IMR-90 (cell line): ENCODE measurements at regions of chr3 and their contacts with region 1.

Region 1: DNA sequence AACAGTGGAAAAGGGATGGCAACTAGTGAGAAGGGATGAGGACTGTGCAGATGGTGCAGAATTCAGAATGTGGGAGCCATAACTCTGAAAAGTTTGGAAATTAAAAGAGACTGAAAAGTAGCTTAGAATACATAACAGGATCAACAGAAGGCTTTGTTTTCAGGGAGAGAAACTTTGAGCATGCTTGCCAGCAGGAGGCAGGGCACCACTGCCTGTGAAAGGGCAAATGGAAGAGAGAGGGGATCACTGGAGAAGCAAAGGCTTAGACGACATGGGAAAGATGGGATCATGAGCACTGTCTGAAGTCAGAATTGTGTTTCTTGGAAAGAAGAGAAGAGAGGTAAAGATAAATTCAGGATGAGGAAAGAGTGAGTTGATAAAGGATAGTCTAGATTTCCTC is 99.6 kb downstream of the ABI3BP start:
- DNase-seq: peak; percentile 66
- ATAC-seq: peak; percentile 77
- H3K4me3 ChIP-seq: no peak overlapping the region
- H3K27ac ChIP-seq: no peak overlapping the region
- H3K4me1 ChIP-seq: no peaks in the 10 kb centered on the region
- H3K27me3 ChIP-seq: no peaks in the 10 kb centered on the region
- CTCF ChIP-seq: peak; percentile 81
- POLR2A ChIP-seq: peak; percentile 47; the same call in 1 of the 2 replicates
- RAD21 ChIP-seq: peak; percentile 96

Region 2: GRCh38 chr3:100463002-100463401 is 430.6 kb before region 1 on chr3:
- CTCF ChIA-PET with region 1: no interaction called
- POLR2A ChIA-PET with region 1: no interaction called
- dilution Hi-C with region 1: no loop called
- in situ Hi-C with region 1: no loop called
- intact Hi-C with region 1: loop called (anchors 2 kb)
- DNase-seq: peak; percentile 78
- ATAC-seq: peak; percentile 94
- H3K4me3 ChIP-seq: no peak overlapping the region
- H3K27ac ChIP-seq: no peak overlapping the region
- H3K4me1 ChIP-seq: no peaks in the 10 kb centered on the region; the same call in 1 of the 2 replicates
- H3K27me3 ChIP-seq: no peaks in the 10 kb centered on the region
- CTCF ChIP-seq: peak; percentile 92
- POLR2A ChIP-seq: 0 out of 2 replicates have a peak, but pooled peaks have one; percentile 27
- RAD21 ChIP-seq: peak; percentile 98

Region 3: DNA sequence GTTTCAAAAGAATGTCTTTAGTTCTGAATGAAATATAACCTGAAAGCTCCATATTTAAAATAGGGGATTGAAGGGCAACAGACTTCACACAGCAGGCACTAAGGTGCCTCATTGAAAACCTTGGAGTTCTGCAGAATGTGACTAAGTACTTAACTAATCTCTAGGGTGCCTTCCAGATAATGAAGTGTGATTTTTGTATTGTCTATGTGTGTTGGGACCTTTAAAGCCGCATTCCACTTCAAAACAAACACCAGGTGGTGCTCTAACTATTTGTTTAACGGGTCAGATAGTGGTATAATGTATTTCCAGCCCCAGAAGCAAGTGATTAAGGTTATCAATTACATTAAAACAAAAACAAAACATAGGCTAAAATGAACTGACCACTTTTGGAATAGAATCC is 156.3 kb before region 1 on chr3:
- CTCF ChIA-PET with region 1: no interaction called
- POLR2A ChIA-PET with region 1: no interaction called
- dilution Hi-C with region 1: no loop called
- in situ Hi-C with region 1: no loop called
- intact Hi-C with region 1: loop called (anchors 5 kb)
- DNase-seq: peak; percentile 15
- ATAC-seq: no peak; the same call in 1 of the 2 replicates
- H3K4me3 ChIP-seq: no peak overlapping the region
- H3K27ac ChIP-seq: no peak overlapping the region
- H3K4me1 ChIP-seq: 0 out of 2 replicates have a peak, but pooled peaks cover 1% of the 10 kb centered on the region
- H3K27me3 ChIP-seq: no peaks in the 10 kb centered on the region
- CTCF ChIP-seq: peak; percentile 39
- POLR2A ChIP-seq: no peak
- RAD21 ChIP-seq: peak; percentile 44

Region 4: GRCh38 chr3:100782906-100783305 is 110.7 kb before region 1 on chr3:
- CTCF ChIA-PET with region 1: no interaction called
- POLR2A ChIA-PET with region 1: no interaction called
- dilution Hi-C with region 1: no loop called
- in situ Hi-C with region 1: no loop called
- intact Hi-C with region 1: no loop called
- DNase-seq: peak; percentile 11
- ATAC-seq: no peak
- H3K4me3 ChIP-seq: no peak overlapping the region
- H3K27ac ChIP-seq: no peak overlapping the region
- H3K4me1 ChIP-seq: peaks cover 4% of the 10 kb centered on the region
- H3K27me3 ChIP-seq: no peaks in the 10 kb centered on the region
- CTCF ChIP-seq: no peak
- POLR2A ChIP-seq: no peak
- RAD21 ChIP-seq: no peak

Region 5: DNA sequence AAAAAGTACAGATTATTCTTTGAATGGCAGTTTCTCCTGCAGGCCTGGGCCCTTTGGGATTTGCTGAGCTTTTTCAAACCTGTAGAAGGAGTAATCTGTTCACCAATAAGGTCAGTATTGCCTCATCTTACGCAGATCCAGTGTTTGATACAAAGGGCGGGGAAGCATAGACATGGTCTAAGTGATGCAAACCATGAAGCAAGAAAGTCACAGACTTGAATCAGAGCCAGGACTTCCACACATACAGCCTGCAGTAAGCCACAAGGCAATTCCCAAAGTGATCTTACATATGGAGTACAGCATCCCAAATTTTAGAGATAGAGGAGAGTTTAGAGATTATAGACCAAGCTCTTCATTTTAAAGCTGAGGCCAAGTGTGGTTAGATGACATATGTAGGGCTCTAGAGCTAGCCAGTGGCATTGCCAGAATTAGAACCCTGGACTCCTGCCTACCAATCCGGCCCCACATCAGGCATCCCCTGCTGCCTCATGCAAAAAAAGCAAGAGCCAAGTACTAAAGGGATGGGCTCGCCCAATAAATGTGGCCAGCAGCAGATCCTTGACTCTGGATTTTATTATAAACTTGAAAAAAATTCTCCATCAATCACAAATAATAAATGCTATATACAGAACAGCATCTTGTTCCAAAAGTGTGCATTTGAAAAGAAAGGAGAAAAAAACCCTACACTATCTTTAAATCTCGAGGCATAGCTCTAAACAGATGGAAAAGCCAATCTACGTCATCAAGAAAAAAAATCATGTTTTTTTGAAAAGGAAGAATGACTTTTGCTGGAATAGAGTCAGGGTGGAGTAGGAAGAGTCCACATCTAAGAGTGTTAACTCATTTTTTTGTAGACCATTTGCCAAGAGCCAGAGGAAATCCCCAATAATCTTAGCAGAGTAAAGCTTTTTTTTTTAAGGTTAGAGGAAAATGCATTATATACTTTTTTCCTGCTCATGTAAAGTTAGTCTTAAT is 75.6 kb after region 1 on chr3:
- CTCF ChIA-PET with region 1: no interaction called
- POLR2A ChIA-PET with region 1: no interaction called
- dilution Hi-C with region 1: no loop called
- in situ Hi-C with region 1: no loop called
- intact Hi-C with region 1: no loop called
- DNase-seq: no peak
- ATAC-seq: no peak
- H3K4me3 ChIP-seq: no peak overlapping the region
- H3K27ac ChIP-seq: no peak overlapping the region
- H3K4me1 ChIP-seq: peaks cover 4% of the 10 kb centered on the region; the same call in 1 of the 2 replicates
- H3K27me3 ChIP-seq: no peaks in the 10 kb centered on the region
- CTCF ChIP-seq: no peak
- POLR2A ChIP-seq: no peak
- RAD21 ChIP-seq: no peak

Region 6: GRCh38 chr3:100993309-100993708 is 99.7 kb after region 1 on chr3 and contains the start of gene ABI3BP:
- CTCF ChIA-PET with region 1: no interaction called
- POLR2A ChIA-PET with region 1: no interaction called
- dilution Hi-C with region 1: no loop called
- in situ Hi-C with region 1: no loop called
- intact Hi-C with region 1: no loop called
- DNase-seq: peak; percentile 89
- ATAC-seq: peak; percentile 99
- H3K4me3 ChIP-seq: peak within 1 kb of the TSS; percentile 55
- H3K27ac ChIP-seq: peak within 1 kb of the TSS; percentile 10; the same call in 1 of the 2 replicates
- H3K4me1 ChIP-seq: peaks cover 2% of the 10 kb centered on the region; the same call in 1 of the 2 replicates
- H3K27me3 ChIP-seq: peaks cover 2% of the 10 kb centered on the region
- CTCF ChIP-seq: no peak
- POLR2A ChIP-seq: no peak
- RAD21 ChIP-seq: no peak; the same call in 1 of the 2 replicates
- total RNA-seq, gene ABI3BP: 3.0 and 4.2 TPM in 2 replicates

Region 7: GRCh38 chr3:101069901-101070798 is 176.6 kb after region 1 on chr3:
- CTCF ChIA-PET with region 1: interaction called, 6 read pairs
- POLR2A ChIA-PET with region 1: interaction called, 5 read pairs
- dilution Hi-C with region 1: no loop called
- in situ Hi-C with region 1: no loop called
- intact Hi-C with region 1: loop called (anchors 5 kb)
- DNase-seq: peak; percentile 22
- ATAC-seq: 0 out of 2 replicates have a peak, but pooled peaks have one; percentile 6
- H3K4me3 ChIP-seq: no peak overlapping the region
- H3K27ac ChIP-seq: 0 out of 2 replicates have a peak overlapping the region, but pooled peaks have one; percentile 5
- H3K4me1 ChIP-seq: peaks cover 15% of the 10 kb centered on the region
- H3K27me3 ChIP-seq: no peaks in the 10 kb centered on the region
- CTCF ChIP-seq: peak; percentile 39
- POLR2A ChIP-seq: no peak
- RAD21 ChIP-seq: peak; percentile 37

Region 8: DNA sequence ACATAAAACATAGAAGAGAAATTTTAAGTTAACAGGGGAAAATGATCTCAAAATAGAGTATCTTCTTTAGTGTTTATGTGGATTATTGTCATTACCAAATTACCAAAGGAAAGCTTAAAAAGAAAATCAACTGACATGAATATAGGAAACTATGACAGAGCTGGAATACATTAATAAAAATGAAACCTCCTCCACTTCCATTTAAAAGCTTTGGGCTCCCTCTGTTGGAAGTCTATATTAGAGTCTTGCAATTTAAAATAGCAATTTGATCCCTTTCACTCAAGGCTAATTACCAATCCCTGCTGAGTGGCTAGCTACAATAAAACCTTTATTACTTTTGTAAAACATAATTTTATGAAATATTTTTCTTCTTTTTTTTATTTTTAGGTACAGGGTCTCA is 488.2 kb after region 1 on chr3:
- CTCF ChIA-PET with region 1: interaction called, 4 read pairs
- POLR2A ChIA-PET with region 1: no interaction called
- dilution Hi-C with region 1: no loop called
- in situ Hi-C with region 1: no loop called
- intact Hi-C with region 1: loop called (anchors 1 kb)
- DNase-seq: peak; percentile 58
- ATAC-seq: 0 out of 2 replicates have a peak, but pooled peaks have one; percentile 35
- H3K4me3 ChIP-seq: no peak overlapping the region
- H3K27ac ChIP-seq: no peak overlapping the region
- H3K4me1 ChIP-seq: peaks cover 5% of the 10 kb centered on the region
- H3K27me3 ChIP-seq: no peaks in the 10 kb centered on the region
- CTCF ChIP-seq: peak; percentile 69
- POLR2A ChIP-seq: no peak
- RAD21 ChIP-seq: peak; percentile 75

Region 9: GRCh38 chr3:101512646-101513418 is 619.2 kb after region 1 on chr3 and contains the start of gene SENP7:
- CTCF ChIA-PET with region 1: no interaction called
- POLR2A ChIA-PET with region 1: no interaction called
- dilution Hi-C with region 1: no loop called
- in situ Hi-C with region 1: no loop called
- intact Hi-C with region 1: loop called (anchors 1 kb)
- DNase-seq: peak; percentile 75
- ATAC-seq: peak; percentile 86
- H3K4me3 ChIP-seq: peak within 1 kb of the TSS; percentile 80
- H3K27ac ChIP-seq: peak within 1 kb of the TSS; percentile 98
- H3K4me1 ChIP-seq: 0 out of 2 replicates have a peak, but pooled peaks cover 2% of the 10 kb centered on the region
- H3K27me3 ChIP-seq: no peaks in the 10 kb centered on the region
- CTCF ChIP-seq: no peak
- POLR2A ChIP-seq: no peak
- RAD21 ChIP-seq: no peak
- total RNA-seq, gene SENP7: 8.4 and 14.7 TPM in 2 replicates

Region 10: DNA sequence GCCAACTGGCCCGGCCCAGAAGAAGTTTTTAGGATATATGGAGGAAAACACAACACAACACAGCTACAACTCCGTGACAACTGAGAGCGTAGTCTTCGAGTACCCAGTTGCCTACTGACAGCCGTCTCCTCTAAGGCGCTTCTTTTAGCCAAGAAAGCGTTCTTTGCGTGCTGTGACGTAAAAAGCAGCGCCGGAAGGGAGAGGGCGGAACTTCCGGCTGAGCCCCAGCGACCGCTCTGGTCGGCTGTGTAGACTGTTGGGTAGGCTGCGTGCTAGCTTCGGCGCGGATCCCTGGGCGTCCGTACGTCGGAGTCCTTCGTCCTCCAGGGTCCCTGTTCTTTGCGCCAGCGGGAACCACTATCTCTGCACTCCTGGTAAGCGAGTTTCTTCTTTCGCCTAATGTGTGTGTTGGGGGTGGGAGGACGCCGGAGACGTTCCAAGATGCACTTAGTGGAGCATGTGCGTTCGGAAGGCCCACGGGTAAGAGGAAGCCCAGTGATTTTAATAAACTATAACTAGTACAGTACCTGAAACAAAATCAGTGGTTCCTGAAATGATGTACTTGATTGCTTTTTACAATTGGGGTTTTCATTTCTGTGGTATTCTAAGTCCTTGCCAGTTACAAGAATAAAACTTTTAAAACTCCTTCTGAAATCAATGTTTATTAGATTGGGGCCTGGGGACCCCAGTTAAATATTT is 668.2 kb after region 1 on chr3 and contains the start of gene TRMT10C:
- CTCF ChIA-PET with region 1: no interaction called
- POLR2A ChIA-PET with region 1: no interaction called
- dilution Hi-C with region 1: no loop called
- in situ Hi-C with region 1: no loop called
- intact Hi-C with region 1: loop called (anchors 10 kb)
- DNase-seq: peak; percentile 93
- ATAC-seq: peak; percentile 95
- H3K4me3 ChIP-seq: peak within 1 kb of the TSS; percentile 98
- H3K27ac ChIP-seq: peak within 1 kb of the TSS; percentile 77
- H3K4me1 ChIP-seq: peaks cover 5% of the 10 kb centered on the region
- H3K27me3 ChIP-seq: peaks cover 1% of the 10 kb centered on the region
- CTCF ChIP-seq: no peak
- POLR2A ChIP-seq: peak; percentile 92
- RAD21 ChIP-seq: no peak
- total RNA-seq, gene TRMT10C: 17.0 and 27.2 TPM in 2 replicates